ENCODE measurements at regions of chr6 and their contacts with region 1.

Region 1: GRCh38 chr6:157764178-157765033 is 58.6 kb upstream of the SNX9 start:
- DNase-seq: peak; percentile 95
- ATAC-seq: peak; percentile 68
- H3K4me3 ChIP-seq: peak overlapping the region; percentile 53; the same call in 1 of the 2 replicates
- H3K27ac ChIP-seq: peak overlapping the region; percentile 76
- H3K4me1 ChIP-seq: peaks cover 72% of the 10 kb centered on the region
- H3K27me3 ChIP-seq: no peaks in the 10 kb centered on the region
- CTCF ChIP-seq: no peak
- EP300 ChIP-seq: peak; percentile 96 to 97
- POLR2A ChIP-seq: no peak
- RAD21 ChIP-seq: 0 out of 2 replicates have a peak, but pooled peaks have one; percentile 2

Region 2: DNA sequence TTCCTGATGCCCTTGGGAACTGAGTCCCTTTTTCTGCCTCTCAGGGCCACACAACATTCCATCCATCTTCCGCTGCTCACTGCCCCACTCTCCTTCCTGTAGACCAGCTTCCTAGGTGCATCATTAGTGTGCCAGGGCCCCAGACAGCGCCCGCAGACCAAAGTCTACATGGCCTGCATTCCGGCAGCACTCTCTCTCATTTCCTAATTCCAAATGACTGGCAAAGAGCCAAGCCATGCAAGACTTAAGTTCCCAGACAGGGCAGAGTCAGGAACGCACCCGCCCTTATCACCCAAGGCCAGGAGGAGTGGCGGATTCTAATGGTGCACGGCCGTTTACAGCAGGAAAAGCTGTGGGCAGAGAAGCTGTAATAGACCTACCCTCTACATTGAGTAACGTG is 1147.0 kb before region 1 on chr6:
- CTCF ChIA-PET with region 1: no interaction called
- POLR2A ChIA-PET with region 1: no interaction called
- RAD21 ChIA-PET with region 1: no interaction called
- SMC1A ChIA-PET with region 1: no interaction called
- in situ Hi-C with region 1: no loop called
- intact Hi-C with region 1: no loop called
- DNase-seq: no peak
- ATAC-seq: no peak
- H3K4me3 ChIP-seq: no peak overlapping the region
- H3K27ac ChIP-seq: no peak overlapping the region
- H3K4me1 ChIP-seq: no peaks in the 10 kb centered on the region
- H3K27me3 ChIP-seq: no peaks in the 10 kb centered on the region
- CTCF ChIP-seq: no peak
- EP300 ChIP-seq: no peak
- POLR2A ChIP-seq: no peak
- RAD21 ChIP-seq: no peak

Region 3: DNA sequence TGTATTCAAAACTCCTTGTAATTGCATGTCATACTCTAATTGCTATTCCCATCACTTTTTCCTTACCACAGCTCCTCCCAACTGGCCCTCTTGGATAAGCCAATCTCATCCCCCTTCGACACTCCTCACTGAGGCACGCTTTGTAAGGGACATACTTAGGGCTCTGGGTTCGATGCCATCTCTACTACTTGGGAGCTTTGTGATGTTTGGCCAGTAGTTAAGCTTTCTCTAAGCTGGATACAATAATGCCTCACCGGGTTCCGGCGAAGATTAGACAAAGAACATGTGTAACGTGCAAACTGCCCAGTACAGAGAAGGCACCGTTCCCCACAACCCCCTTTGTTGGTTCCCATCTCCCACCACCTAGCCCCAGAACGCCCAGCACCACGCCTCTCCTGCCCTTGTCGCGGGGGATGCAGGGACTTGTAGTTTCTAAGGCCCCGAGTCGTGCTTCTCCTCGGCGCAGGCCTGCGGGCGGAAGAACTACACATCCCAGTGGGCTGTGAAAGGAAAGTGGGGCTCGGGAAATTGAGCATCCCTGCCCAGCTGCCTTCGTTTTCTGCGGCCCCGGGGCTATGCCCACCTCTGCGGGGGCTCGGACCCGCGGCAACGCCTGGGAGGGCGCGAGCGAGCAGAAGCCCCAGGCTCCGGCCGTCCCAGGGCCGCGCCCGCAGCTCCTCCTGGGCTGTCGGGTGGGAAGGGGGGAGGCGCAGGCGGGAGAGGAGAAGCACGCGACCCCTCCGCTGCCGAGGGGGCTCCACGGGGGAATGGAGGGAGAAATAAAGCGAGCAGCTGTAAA is 384.6 kb before region 1 on chr6:
- CTCF ChIA-PET with region 1: no interaction called
- POLR2A ChIA-PET with region 1: no interaction called
- RAD21 ChIA-PET with region 1: no interaction called
- SMC1A ChIA-PET with region 1: no interaction called
- in situ Hi-C with region 1: no loop called
- intact Hi-C with region 1: loop called (anchors 5 kb)
- DNase-seq: peak; percentile 65
- ATAC-seq: peak; percentile 86
- H3K4me3 ChIP-seq: peak overlapping the region; percentile 98
- H3K27ac ChIP-seq: peak overlapping the region; percentile 50; the same call in 1 of the 2 replicates
- H3K4me1 ChIP-seq: no peaks in the 10 kb centered on the region
- H3K27me3 ChIP-seq: peaks cover 0 to 4% of the 10 kb centered on the region in 2 experiments; a peak in 1 of 4 replicates
- CTCF ChIP-seq: no peak
- EP300 ChIP-seq: no peak
- POLR2A ChIP-seq: 0 out of 2 replicates have a peak, but pooled peaks have one; percentile 42
- RAD21 ChIP-seq: no peak

Region 4: GRCh38 chr6:157800420-157801237 is 36.2 kb after region 1 on chr6:
- CTCF ChIA-PET with region 1: interaction called, 4 read pairs
- POLR2A ChIA-PET with region 1: interaction called, 3 read pairs
- RAD21 ChIA-PET with region 1: interaction called, 5 read pairs
- SMC1A ChIA-PET with region 1: interaction called, 7 read pairs
- in situ Hi-C with region 1: no loop called
- intact Hi-C with region 1: loop called (anchors 2 kb)
- DNase-seq: peak; percentile 76
- ATAC-seq: peak; percentile 98
- H3K4me3 ChIP-seq: peak overlapping the region; percentile 37; the same call in 1 of the 2 replicates
- H3K27ac ChIP-seq: 0 out of 2 replicates have a peak overlapping the region, but pooled peaks have one; percentile 32
- H3K4me1 ChIP-seq: peaks cover 23% of the 10 kb centered on the region
- H3K27me3 ChIP-seq: peaks cover 0 to 2% of the 10 kb centered on the region in 2 experiments; a peak in 3 of 4 replicates
- CTCF ChIP-seq: no peak
- EP300 ChIP-seq: peak; percentile 39 to 94
- POLR2A ChIP-seq: no peak
- RAD21 ChIP-seq: no peak

Region 5: DNA sequence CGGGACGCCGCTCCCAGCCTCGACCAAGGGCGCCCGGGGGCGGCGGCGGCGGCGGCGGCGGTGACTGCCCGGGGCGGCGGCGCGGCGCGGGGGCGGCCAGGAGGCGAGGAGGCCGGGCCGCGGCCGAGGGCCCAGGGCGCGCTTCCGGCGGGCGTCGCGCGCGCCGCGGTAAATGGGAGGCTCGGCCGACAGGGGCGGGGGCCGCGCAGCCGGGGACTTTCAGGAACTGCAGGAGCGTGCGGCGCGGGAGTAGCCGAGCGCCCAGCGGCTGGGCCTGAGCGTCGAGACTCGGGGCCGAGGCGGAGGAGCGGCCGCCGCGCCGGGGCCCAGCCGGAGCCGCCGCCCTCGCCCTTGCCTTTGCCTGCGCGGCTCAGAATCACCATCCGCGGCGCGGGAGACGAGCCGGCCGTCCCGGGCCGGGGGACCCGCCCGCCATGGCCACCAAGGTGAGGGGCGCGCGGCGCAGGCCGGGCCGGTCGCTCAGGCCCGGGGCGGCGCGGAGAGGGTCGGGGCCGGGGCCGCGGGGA is 58.7 kb after region 1 on chr6 and contains the start of gene SNX9:
- CTCF ChIA-PET with region 1: interaction called, 3 read pairs
- POLR2A ChIA-PET with region 1: no interaction called
- RAD21 ChIA-PET with region 1: no interaction called
- SMC1A ChIA-PET with region 1: interaction called, 10 read pairs
- in situ Hi-C with region 1: no loop called
- intact Hi-C with region 1: loop called (anchors 1 kb)
- DNase-seq: no peak
- ATAC-seq: peak; percentile 72
- H3K4me3 ChIP-seq: peak within 1 kb of the TSS; percentile 65
- H3K27ac ChIP-seq: no peak within 1 kb of the TSS
- H3K4me1 ChIP-seq: no peaks in the 10 kb centered on the region; the same call in 1 of the 2 replicates
- H3K27me3 ChIP-seq: peaks cover 0 to 24% of the 10 kb centered on the region in 2 experiments; a peak in 2 of 4 replicates
- CTCF ChIP-seq: no peak
- EP300 ChIP-seq: no peak
- POLR2A ChIP-seq: peak; percentile 58
- RAD21 ChIP-seq: no peak
- polyA plus RNA-seq, gene SNX9: 0.03 to 0.05 TPM

Region 6: GRCh38 chr6:157830354-157831017 is 66.1 kb after region 1 on chr6:
- CTCF ChIA-PET with region 1: no interaction called
- POLR2A ChIA-PET with region 1: no interaction called
- RAD21 ChIA-PET with region 1: interaction called, 4 read pairs
- SMC1A ChIA-PET with region 1: interaction called, 10 read pairs
- in situ Hi-C with region 1: no loop called
- intact Hi-C with region 1: loop called (anchors 2 kb)
- DNase-seq: peak; percentile 68
- ATAC-seq: peak; percentile 96
- H3K4me3 ChIP-seq: no peak overlapping the region
- H3K27ac ChIP-seq: no peak overlapping the region
- H3K4me1 ChIP-seq: peaks cover 15% of the 10 kb centered on the region; the same call in 1 of the 2 replicates
- H3K27me3 ChIP-seq: peaks cover 0 to 3% of the 10 kb centered on the region in 2 experiments; a peak in 1 of 4 replicates
- CTCF ChIP-seq: no peak
- EP300 ChIP-seq: peak; percentile 67 to 90; a peak in 3 of 4 replicates
- POLR2A ChIP-seq: no peak
- RAD21 ChIP-seq: no peak

Region 7: DNA sequence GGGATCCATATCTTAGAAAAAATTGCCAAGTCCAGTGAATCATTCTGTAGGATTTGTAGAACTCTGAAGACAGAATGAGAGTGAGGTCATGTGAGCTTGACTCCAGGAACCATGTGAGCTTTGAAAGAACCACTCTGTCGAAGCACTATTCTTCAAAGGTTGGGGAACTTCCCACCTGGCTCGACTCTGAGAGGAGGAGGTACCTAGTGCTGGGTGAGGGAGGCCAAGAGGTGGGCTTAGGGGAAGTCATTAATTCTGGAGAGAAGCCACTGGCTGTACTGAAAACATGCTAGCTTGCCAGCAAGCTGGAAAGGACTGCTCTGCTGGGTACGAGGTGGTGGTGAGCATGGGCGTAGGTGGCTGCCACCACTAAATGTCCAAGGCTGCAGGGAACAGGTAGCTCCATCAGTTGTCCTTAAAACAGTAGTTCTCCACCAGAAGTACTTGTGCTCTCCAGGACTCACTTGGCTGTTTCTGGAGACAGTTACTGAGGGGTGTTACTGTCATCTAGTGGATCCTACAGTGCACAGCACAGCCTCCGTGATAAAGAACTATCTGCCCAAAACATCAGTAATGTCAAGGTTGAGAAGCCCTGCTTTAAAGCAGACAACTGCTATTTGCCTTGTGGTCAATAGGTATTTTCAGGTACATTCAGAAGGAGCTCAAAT is 182.6 kb after region 1 on chr6:
- CTCF ChIA-PET with region 1: interaction called, 11 read pairs
- POLR2A ChIA-PET with region 1: no interaction called
- RAD21 ChIA-PET with region 1: interaction called, 6 read pairs
- SMC1A ChIA-PET with region 1: interaction called, 5 read pairs
- in situ Hi-C with region 1: loop called (anchors 5 kb)
- intact Hi-C with region 1: no loop called
- DNase-seq: peak; percentile 9
- ATAC-seq: peak; percentile 93
- H3K4me3 ChIP-seq: no peak overlapping the region
- H3K27ac ChIP-seq: no peak overlapping the region
- H3K4me1 ChIP-seq: no peaks in the 10 kb centered on the region
- H3K27me3 ChIP-seq: no peaks in the 10 kb centered on the region
- CTCF ChIP-seq: peak; percentile 80 to 89 (median 87)
- EP300 ChIP-seq: no peak
- POLR2A ChIP-seq: no peak
- RAD21 ChIP-seq: peak; percentile 89

Region 8: GRCh38 chr6:158649289-158650143 is 885.1 kb after region 1 on chr6 and contains the start of gene SYTL3:
- CTCF ChIA-PET with region 1: no interaction called
- POLR2A ChIA-PET with region 1: no interaction called
- RAD21 ChIA-PET with region 1: no interaction called
- SMC1A ChIA-PET with region 1: no interaction called
- in situ Hi-C with region 1: no loop called
- intact Hi-C with region 1: loop called (anchors 5 kb)
- DNase-seq: peak; percentile 95
- ATAC-seq: peak; percentile 71
- H3K4me3 ChIP-seq: peak within 1 kb of the TSS; percentile 45; the same call in 1 of the 2 replicates
- H3K27ac ChIP-seq: peak within 1 kb of the TSS; percentile 76
- H3K4me1 ChIP-seq: peaks cover 43% of the 10 kb centered on the region
- H3K27me3 ChIP-seq: no peaks in the 10 kb centered on the region
- CTCF ChIP-seq: no peak
- EP300 ChIP-seq: peak; percentile 31 to 85; a peak in 3 of 4 replicates
- POLR2A ChIP-seq: peak; percentile 55
- RAD21 ChIP-seq: no peak
- polyA plus RNA-seq, gene SYTL3: 3.3 to 4.2 TPM